Left cardiac atrium (tissue), 4 donors: ENCODE measurements at regions of chr14 and their contacts with region 1.

Region 1: GRCh38 chr14:92951912-92952471 is 29.0 kb downstream of the CHGA start:
- DNase-seq: peak; percentile 81
- ATAC-seq: peak; percentile 76 to 84

Region 2: DNA sequence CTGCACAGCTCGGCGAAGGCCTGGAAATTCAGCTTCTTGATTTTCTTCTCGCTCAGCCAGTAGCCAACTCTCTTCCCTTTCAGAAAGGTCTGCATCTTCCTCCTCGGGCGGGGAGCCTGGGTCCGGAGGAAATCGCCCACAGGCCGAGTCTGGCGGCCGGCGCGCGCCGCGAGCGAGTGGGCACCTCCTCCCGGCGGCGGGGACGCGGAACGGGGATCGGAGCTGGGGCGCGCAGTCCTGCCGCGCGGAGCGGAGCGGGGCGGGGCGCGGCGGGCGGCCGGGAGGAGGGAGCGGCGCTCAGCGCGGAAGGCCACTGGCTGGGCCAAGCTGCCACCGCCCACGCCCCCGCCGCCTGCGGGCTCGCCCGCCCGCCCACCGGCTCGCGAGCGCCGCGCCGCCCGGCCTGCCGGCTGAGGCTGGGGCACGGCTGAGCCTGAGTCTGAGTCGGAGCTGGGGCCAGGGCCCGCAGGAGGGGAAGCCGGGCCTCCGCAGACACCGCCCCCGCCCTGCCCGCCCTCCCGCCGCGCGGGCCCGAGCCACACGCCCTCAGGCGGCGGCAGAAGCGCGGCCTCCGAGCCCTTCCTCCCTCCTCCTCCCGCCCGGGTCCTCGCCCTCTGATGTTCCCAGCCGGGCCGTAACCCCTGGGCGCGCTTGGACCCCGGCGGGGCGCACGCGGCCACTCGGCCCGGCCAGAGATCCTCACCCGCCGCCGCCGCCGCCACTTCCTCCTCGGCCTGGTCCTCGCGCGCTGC is 163.3 kb after region 1 on chr14:
- intact Hi-C with region 1: loop called in 1 of 2 experiments (anchors 5 kb)
- DNase-seq: peak; percentile 92
- ATAC-seq: peak; percentile 93 to 94

Region 3: DNA sequence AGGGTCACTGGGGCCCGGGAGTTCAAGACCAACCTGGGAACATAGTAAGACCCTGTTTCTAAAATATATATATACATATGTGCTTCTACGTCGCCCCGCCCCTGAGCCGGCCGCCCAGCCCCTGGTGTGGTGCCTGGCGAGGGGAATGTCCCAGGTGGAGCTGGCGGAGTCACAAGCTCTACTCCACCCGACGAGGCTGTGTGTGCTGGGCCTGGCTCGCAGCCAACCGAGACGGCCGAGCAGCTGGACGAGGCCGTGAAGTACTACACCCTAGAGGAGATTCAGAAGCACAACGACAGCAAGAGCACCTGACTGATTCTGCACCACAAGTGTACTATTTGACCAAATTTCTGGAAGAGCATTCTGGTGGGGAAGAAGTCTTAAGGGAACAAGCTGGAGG is 185.9 kb after region 1 on chr14:
- intact Hi-C with region 1: loop called (anchors 1 to 5 kb)
- DNase-seq: peak; percentile 51
- ATAC-seq: peak; percentile 60 to 71